Mammary epithelial cell (primary cell): ENCODE measurements at regions of chr10 and their contacts with region 1.

Region 1: DNA sequence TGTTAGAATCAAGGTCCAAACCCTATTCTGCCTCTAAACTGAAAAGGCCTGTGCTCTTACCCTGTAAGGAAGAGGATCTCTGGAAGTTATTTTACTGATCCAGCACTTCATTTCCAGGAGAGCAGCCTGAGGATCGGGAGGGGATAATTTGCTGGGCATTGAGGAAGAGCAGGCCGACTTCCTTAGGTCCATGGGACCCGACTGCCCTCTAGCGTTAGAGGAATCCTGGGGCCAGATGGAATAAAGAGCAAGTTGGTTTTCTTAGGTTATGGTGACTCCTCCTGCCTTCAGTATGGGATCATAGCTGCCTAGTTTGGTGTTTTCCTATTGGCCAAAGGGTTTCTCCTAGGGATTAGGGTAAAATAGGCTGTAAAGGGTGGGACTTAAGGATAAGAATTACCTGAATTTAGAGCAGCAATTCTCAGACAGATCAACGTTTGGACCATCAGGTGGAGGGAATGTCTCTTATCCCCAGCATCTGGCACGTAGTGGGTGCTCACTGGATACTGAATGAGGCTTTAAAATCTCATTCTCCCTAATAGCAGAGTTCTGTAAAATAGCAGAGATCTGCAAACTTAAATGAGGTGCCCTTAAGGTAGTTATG is 40.0 kb upstream of the SORBS1 start:
- DNase-seq: peak; percentile 76
- H3K4me3 ChIP-seq: no peak overlapping the region
- H3K27ac ChIP-seq: no peak overlapping the region
- H3K4me1 ChIP-seq: no peaks in the 10 kb centered on the region
- H3K27me3 ChIP-seq: no peaks in the 10 kb centered on the region
- CTCF ChIP-seq: peak; percentile 92 to 98

Region 2: DNA sequence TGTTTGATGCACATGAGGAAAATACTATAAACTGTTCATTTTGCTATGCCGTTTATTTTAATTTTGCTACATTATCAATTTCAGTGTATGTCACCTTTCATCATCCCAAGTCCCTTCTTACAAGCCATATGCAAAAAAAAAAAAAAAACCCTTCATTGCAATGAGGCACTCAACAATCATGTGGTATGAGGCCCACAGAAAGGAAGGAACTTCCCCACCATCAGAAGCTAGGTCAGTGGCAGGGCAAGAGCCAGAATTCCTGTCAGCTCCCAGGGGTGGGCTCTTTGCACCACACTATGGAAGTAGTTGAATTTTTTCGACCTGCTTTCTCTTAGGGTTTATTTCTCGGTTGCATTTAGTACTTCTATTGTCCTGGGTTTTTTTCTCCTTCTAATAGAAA is 1313.9 kb before region 1 on chr10:
- CTCF ChIA-PET with region 1: no interaction called
- dilution Hi-C with region 1: no loop called
- in situ Hi-C with region 1: no loop called
- intact Hi-C with region 1: no loop called
- DNase-seq: no peak
- H3K4me3 ChIP-seq: no peak overlapping the region
- H3K27ac ChIP-seq: no peak overlapping the region
- H3K4me1 ChIP-seq: no peaks in the 10 kb centered on the region
- H3K27me3 ChIP-seq: peaks cover 12% of the 10 kb centered on the region
- CTCF ChIP-seq: no peak

Region 3: GRCh38 chr10:95183271-95184230 is 417.7 kb before region 1 on chr10:
- CTCF ChIA-PET with region 1: no interaction called
- dilution Hi-C with region 1: no loop called
- in situ Hi-C with region 1: loop called in 1 of 2 experiments (anchors 25 kb)
- intact Hi-C with region 1: loop called (anchors 5 kb)
- DNase-seq: peak; percentile 70
- H3K4me3 ChIP-seq: peak overlapping the region; percentile 58 to 66 (median 66)
- H3K27ac ChIP-seq: no peak overlapping the region
- H3K4me1 ChIP-seq: peaks cover 4% of the 10 kb centered on the region
- H3K27me3 ChIP-seq: no peaks in the 10 kb centered on the region
- CTCF ChIP-seq: peak; percentile 49 to 74

Region 4: DNA sequence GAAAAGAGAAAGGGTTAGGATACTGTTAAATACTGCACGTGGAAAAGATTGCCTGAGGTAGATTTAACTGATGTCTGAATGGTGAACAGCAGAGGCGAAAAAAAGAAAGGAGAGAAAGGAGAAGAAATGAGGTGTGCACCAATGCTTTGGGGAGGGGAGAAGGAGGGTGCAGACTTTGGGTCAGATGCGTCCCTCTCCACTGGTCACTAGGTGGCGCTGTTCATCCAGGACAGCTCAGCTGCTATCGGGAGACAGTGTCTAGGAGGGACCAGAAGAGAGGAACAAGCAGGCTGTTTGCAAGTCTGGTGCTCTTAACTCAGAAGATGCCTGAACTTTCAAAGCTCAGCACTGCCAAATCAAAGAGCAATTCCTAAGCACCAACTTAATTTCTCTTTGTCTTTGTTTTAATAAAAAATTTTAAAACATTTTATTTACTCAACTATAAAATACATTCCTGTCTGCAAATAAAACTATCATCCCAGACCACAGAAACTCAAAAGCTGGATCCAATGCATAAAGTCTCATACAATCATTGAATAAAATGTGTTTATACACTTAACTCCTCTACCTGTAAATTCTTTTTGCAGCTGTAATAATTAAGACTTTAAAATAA is 226.5 kb before region 1 on chr10:
- CTCF ChIA-PET with region 1: interaction called, 7 read pairs
- dilution Hi-C with region 1: no loop called
- in situ Hi-C with region 1: loop called (anchors 5 kb)
- intact Hi-C with region 1: loop called (anchors 1 kb)
- DNase-seq: peak; percentile 68
- H3K4me3 ChIP-seq: no peak overlapping the region
- H3K27ac ChIP-seq: no peak overlapping the region
- H3K4me1 ChIP-seq: no peaks in the 10 kb centered on the region
- H3K27me3 ChIP-seq: no peaks in the 10 kb centered on the region
- CTCF ChIP-seq: peak; percentile 95 to 99

Region 5: DNA sequence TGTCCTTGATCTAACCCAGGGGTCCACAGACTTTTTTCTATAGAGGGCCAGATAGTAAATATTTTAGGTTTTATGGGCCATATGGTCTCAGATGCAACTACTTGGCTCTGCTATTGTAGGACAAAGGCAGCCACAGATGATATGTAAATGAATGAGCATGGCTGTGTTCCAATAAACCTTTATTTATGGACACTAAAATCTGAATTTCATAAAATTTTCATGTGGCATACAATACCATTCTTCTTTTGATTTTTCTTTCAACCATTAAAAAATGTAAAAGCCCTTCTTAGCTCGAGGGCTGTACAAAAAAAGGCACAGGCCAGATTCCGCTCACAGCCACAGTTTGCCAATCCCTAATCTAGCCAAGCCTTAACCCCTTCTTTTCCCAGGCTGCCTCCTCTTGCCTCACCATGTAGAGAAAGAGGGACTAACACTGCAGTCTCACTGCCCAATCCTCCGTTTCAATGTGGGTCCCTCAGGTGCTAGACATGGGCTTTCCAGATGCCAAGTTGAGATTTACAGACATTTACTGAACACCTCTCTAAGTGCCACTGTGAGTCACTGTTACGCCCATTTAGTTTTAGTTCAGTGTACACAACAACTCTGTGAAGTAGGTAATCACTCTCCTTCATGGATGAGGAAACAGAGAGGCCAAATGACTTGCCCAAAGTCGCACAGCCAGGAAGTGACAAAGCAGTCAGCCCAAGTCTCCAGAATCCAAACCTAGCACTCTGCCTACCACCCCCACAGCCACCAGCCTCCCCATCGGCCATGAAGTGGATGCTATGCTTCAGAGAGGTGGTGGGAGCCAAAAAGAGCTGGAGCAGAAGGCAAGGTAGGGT is 177.8 kb before region 1 on chr10:
- CTCF ChIA-PET with region 1: no interaction called
- dilution Hi-C with region 1: loop called (anchors 5 kb)
- in situ Hi-C with region 1: loop called in 1 of 2 experiments (anchors 10 kb)
- intact Hi-C with region 1: no loop called
- DNase-seq: no peak
- H3K4me3 ChIP-seq: no peak overlapping the region
- H3K27ac ChIP-seq: no peak overlapping the region
- H3K4me1 ChIP-seq: no peaks in the 10 kb centered on the region
- H3K27me3 ChIP-seq: no peaks in the 10 kb centered on the region
- CTCF ChIP-seq: no peak

Region 6: GRCh38 chr10:95445837-95446486 is 155.3 kb before region 1 on chr10:
- CTCF ChIA-PET with region 1: no interaction called
- dilution Hi-C with region 1: no loop called
- in situ Hi-C with region 1: no loop called
- intact Hi-C with region 1: loop called (anchors 1 kb)
- DNase-seq: peak; percentile 69
- H3K4me3 ChIP-seq: no peak overlapping the region
- H3K27ac ChIP-seq: peak overlapping the region; percentile 66
- H3K4me1 ChIP-seq: peaks cover 16% of the 10 kb centered on the region
- H3K27me3 ChIP-seq: no peaks in the 10 kb centered on the region
- CTCF ChIP-seq: peak; percentile 89 to 93